ENCODE measurements at regions of chr4 and their contacts with region 1.

Region 1: GRCh38 chr4:3106339-3107186 is 32.1 kb downstream of the HTT start:
- DNase-seq: peak; percentile 88
- H3K4me3 ChIP-seq: no peak overlapping the region
- H3K27ac ChIP-seq: peak overlapping the region; percentile 21
- H3K4me1 ChIP-seq: peaks cover 2% of the 10 kb centered on the region
- H3K27me3 ChIP-seq: no peaks in the 10 kb centered on the region
- CTCF ChIP-seq: peak; percentile 97 to 99

Region 2: GRCh38 chr4:3074078-3074795 is 32.3 kb before region 1 on chr4 and contains the starts of genes HTT and HTT-AS:
- CTCF ChIA-PET with region 1: no interaction called
- dilution Hi-C with region 1: no loop called
- in situ Hi-C with region 1: no loop called
- intact Hi-C with region 1: loop called (anchors 2 kb)
- DNase-seq: peak; percentile 92
- H3K4me3 ChIP-seq: peak within 1 kb of the TSS; percentile 91 to 99 (median 99)
- H3K27ac ChIP-seq: peak within 1 kb of the TSS; percentile 76
- H3K4me1 ChIP-seq: peaks cover 11% of the 10 kb centered on the region
- H3K27me3 ChIP-seq: no peaks in the 10 kb centered on the region
- CTCF ChIP-seq: no peak
- total RNA-seq, gene HTT: 44.2 to 53.3 TPM
- total RNA-seq, gene HTT-AS: not detected

Region 3: DNA sequence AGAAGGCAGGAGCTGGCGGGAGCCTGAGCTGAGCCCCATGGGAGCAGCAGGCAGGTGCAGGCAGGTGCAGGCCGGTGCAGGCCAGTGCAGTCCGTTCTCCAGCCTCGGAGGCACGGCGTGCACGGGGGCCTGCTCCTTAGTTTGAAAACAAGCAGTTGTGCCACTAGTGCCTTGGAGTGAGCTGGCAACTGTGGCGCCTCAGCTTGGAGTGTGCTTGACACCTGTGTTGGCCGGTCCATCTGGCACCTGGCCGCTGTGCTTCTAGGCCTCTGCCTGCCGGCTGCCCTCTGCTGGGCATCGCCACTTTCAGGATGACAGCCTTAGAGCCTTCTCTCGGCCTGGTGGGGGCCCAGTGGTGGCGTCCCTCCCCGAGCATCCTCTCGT is 234.1 kb after region 1 on chr4:
- CTCF ChIA-PET with region 1: no interaction called
- dilution Hi-C with region 1: no loop called
- in situ Hi-C with region 1: loop called in 1 of 2 experiments (anchors 25 kb)
- intact Hi-C with region 1: loop called (anchors 1 kb)
- DNase-seq: peak; percentile 7
- H3K4me3 ChIP-seq: no peak overlapping the region
- H3K27ac ChIP-seq: no peak overlapping the region
- H3K4me1 ChIP-seq: no peaks in the 10 kb centered on the region
- H3K27me3 ChIP-seq: no peaks in the 10 kb centered on the region
- CTCF ChIP-seq: peak in 1 of 2 donors; percentile 64

Region 4: DNA sequence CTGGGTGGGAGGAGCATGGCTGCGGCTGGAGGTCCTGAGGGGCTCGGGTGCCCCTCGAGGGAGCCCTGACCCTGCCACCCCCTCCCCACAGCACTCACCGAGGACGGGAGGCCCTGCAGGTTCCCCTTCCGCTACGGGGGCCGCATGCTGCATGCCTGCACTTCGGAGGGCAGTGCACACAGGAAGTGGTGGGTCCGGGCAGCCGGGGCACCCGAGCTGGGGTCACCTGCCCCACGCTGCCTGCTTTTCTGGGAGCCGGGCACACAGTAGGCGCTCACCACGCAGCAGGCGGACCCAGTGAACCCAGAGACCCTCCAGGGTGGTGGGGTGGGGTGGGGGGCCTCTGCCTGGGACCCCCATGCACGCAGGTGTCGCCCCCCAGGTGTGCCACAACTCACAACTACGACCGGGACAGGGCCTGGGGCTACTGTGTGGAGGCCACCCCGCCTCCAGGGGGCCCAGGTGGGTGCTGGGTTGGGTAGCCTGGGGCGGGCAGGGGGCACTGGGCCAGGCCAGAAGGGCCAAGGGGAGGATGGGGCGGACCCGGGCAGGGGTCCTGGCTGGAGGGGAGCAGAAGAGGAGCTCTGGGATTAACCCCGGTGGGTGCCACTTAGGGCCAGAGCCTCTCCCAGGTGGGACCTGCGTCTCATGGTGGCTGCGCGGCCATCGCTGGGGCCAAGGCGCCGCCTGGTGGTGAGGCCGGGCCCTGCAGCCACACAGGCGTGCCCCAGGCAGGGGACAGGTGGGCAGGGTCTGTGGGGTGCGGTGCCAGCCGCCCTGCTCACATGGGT is 336.6 kb after region 1 on chr4:
- CTCF ChIA-PET with region 1: no interaction called
- dilution Hi-C with region 1: no loop called
- in situ Hi-C with region 1: no loop called
- intact Hi-C with region 1: loop called (anchors 1 kb)
- DNase-seq: peak; percentile 32
- H3K4me3 ChIP-seq: no peak overlapping the region
- H3K27ac ChIP-seq: no peak overlapping the region
- H3K4me1 ChIP-seq: no peaks in the 10 kb centered on the region
- H3K27me3 ChIP-seq: no peaks in the 10 kb centered on the region
- CTCF ChIP-seq: peak; percentile 94 to 95

Region 5: GRCh38 chr4:3880615-3881120 is 774.1 kb after region 1 on chr4:
- CTCF ChIA-PET with region 1: interaction called, 3 read pairs
- dilution Hi-C with region 1: no loop called
- in situ Hi-C with region 1: no loop called
- intact Hi-C with region 1: loop called (anchors 1 kb)
- DNase-seq: peak; percentile 50
- H3K4me3 ChIP-seq: no peak overlapping the region
- H3K27ac ChIP-seq: no peak overlapping the region
- H3K4me1 ChIP-seq: no peaks in the 10 kb centered on the region
- H3K27me3 ChIP-seq: peaks cover 13% of the 10 kb centered on the region
- CTCF ChIP-seq: peak; percentile 49 to 75